ENCODE measurements at regions of chr15 and their contacts with region 1.

Region 1: GRCh38 chr15:62896978-62897647 is 145.4 kb upstream of the TPM1 start:
- DNase-seq: peak; percentile 99
- H3K4me3 ChIP-seq: no peak overlapping the region
- H3K27ac ChIP-seq: peak overlapping the region; percentile 100
- H3K4me1 ChIP-seq: peaks cover 42% of the 10 kb centered on the region
- H3K27me3 ChIP-seq: no peaks in the 10 kb centered on the region
- CTCF ChIP-seq: no peak
- POLR2A ChIP-seq: peak; percentile 78

Region 2: GRCh38 chr15:62173215-62173614 is 723.9 kb before region 1 on chr15:
- CTCF ChIA-PET with region 1: no interaction called
- POLR2A ChIA-PET with region 1: interaction called, 3 read pairs
- dilution Hi-C with region 1: no loop called
- intact Hi-C with region 1: loop called (anchors 1 kb)
- DNase-seq: peak; percentile 97
- H3K4me3 ChIP-seq: peak overlapping the region in 2 of 3 experiments; percentile 10 to 68
- H3K27ac ChIP-seq: peak overlapping the region; percentile 100
- H3K4me1 ChIP-seq: peaks cover 42% of the 10 kb centered on the region
- H3K27me3 ChIP-seq: no peaks in the 10 kb centered on the region
- CTCF ChIP-seq: no peak
- POLR2A ChIP-seq: peak; percentile 51

Region 3: DNA sequence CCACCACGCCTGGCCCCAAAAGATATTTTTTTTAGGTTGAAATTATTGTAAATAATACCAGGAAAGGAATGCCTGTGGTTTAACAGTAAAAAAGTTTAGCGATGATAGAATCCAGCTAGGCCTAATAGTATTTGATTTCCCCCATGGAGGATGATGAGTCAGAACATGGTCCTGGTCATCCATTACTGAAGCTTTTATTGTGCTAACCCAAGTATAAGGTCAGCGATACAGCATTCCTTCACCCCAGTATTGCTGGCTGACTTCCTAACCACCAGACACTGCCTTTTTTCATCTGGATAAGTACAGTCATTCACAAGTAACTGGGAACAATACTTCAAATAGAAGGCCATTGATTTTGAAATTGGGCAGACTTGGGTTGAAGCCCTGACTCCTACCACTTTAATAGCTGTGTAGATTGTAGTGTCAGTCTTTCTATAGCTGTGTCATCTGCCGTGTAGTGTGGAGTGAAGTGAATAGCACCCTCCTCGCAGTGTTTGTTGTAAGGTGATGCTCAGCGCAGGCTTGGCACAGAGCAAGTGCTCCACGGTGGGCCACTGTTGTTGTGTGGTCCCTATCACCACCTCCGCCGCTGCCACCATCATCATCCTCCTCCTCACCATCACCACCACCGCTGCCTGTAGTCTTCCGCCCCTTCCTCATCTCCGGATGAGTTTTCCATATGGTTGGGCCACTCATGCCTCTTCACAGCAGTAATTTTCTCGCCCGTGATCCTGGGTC is 290.6 kb before region 1 on chr15:
- CTCF ChIA-PET with region 1: no interaction called
- POLR2A ChIA-PET with region 1: no interaction called
- dilution Hi-C with region 1: no loop called
- intact Hi-C with region 1: no loop called
- DNase-seq: no peak
- H3K4me3 ChIP-seq: no peak overlapping the region
- H3K27ac ChIP-seq: no peak overlapping the region
- H3K4me1 ChIP-seq: no peaks in the 10 kb centered on the region
- H3K27me3 ChIP-seq: no peaks in the 10 kb centered on the region
- CTCF ChIP-seq: no peak
- POLR2A ChIP-seq: no peak

Region 4: GRCh38 chr15:62828364-62828763 is 68.7 kb before region 1 on chr15:
- CTCF ChIA-PET with region 1: no interaction called
- POLR2A ChIA-PET with region 1: no interaction called
- dilution Hi-C with region 1: no loop called
- intact Hi-C with region 1: no loop called
- DNase-seq: no peak
- H3K4me3 ChIP-seq: no peak overlapping the region
- H3K27ac ChIP-seq: no peak overlapping the region
- H3K4me1 ChIP-seq: no peaks in the 10 kb centered on the region
- H3K27me3 ChIP-seq: no peaks in the 10 kb centered on the region
- CTCF ChIP-seq: no peak
- POLR2A ChIP-seq: no peak

Region 5: GRCh38 chr15:62847900-62848489 is 49.1 kb before region 1 on chr15:
- CTCF ChIA-PET with region 1: interaction called, 28 read pairs
- POLR2A ChIA-PET with region 1: interaction called, 9 read pairs
- dilution Hi-C with region 1: no loop called
- intact Hi-C with region 1: loop called (anchors 1 kb)
- DNase-seq: peak; percentile 65
- H3K4me3 ChIP-seq: no peak overlapping the region
- H3K27ac ChIP-seq: peak overlapping the region; percentile 44
- H3K4me1 ChIP-seq: peaks cover 39% of the 10 kb centered on the region
- H3K27me3 ChIP-seq: no peaks in the 10 kb centered on the region
- CTCF ChIP-seq: peak; percentile 57 to 73
- POLR2A ChIP-seq: no peak

Region 6: GRCh38 chr15:62928242-62928995 is 31.3 kb after region 1 on chr15:
- CTCF ChIA-PET with region 1: interaction called, 6 read pairs
- POLR2A ChIA-PET with region 1: no interaction called
- dilution Hi-C with region 1: no loop called
- intact Hi-C with region 1: loop called (anchors 1 kb)
- DNase-seq: peak; percentile 68
- H3K4me3 ChIP-seq: peak overlapping the region in 1 of 3 experiments; percentile 40
- H3K27ac ChIP-seq: peak overlapping the region; percentile 99
- H3K4me1 ChIP-seq: peaks cover 21% of the 10 kb centered on the region
- H3K27me3 ChIP-seq: no peaks in the 10 kb centered on the region
- CTCF ChIP-seq: peak; percentile 5 to 9
- POLR2A ChIP-seq: no peak

Region 7: DNA sequence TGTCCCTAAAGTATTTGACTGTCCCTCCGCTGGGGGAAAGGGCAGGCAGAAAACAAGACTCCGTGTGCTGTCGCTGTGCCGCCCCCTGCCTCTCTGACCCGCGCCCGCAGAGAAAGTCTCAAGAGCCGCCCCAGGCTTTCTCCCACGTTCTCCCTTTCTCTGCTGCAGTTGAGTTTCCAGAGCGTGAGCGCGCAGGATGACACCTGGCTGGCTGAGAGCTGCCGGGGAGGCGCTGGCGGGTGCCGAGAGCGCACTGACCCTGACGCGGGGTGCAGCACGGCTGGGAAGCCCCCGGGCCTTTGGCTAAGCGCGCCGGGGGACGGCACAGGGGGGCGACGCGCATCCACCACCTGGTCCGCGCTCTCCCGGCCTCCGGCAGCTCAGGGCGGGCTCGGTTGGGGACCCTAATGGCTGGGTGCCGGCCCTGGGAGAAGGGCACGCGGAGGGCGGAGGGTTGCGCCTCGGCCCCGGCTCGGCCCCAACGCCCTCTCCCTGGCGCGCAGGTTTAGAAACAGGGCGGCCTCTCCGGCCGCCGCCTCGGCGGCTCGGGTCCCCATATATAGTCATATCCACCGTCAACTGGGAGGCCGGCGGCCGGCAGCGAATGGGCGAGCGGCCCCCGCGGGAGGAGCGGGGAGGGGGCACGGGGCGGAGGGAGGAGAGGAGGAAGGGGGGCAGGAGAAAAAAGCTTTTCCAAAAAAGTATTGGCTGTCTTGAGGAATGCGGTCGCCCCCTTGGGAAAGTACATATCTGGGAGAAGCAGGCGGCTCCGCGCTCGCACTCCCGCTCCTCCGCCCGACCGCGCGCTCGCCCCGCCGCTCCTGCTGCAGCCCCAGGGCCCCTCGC is 145.1 kb after region 1 on chr15 and contains the start of gene TPM1:
- CTCF ChIA-PET with region 1: interaction called, 29 read pairs
- POLR2A ChIA-PET with region 1: interaction called, 70 read pairs
- dilution Hi-C with region 1: no loop called
- intact Hi-C with region 1: loop called (anchors 1 kb)
- DNase-seq: peak; percentile 91
- H3K4me3 ChIP-seq: peak within 1 kb of the TSS; percentile 77 to 95 (median 83)
- H3K27ac ChIP-seq: peak within 1 kb of the TSS; percentile 87
- H3K4me1 ChIP-seq: peaks cover 31% of the 10 kb centered on the region
- H3K27me3 ChIP-seq: no peaks in the 10 kb centered on the region
- CTCF ChIP-seq: peak in 1 of 2 donors; percentile 12
- POLR2A ChIP-seq: peak; percentile 91
- total RNA-seq, gene TPM1: 558 and 678 TPM in 2 replicates

Region 8: DNA sequence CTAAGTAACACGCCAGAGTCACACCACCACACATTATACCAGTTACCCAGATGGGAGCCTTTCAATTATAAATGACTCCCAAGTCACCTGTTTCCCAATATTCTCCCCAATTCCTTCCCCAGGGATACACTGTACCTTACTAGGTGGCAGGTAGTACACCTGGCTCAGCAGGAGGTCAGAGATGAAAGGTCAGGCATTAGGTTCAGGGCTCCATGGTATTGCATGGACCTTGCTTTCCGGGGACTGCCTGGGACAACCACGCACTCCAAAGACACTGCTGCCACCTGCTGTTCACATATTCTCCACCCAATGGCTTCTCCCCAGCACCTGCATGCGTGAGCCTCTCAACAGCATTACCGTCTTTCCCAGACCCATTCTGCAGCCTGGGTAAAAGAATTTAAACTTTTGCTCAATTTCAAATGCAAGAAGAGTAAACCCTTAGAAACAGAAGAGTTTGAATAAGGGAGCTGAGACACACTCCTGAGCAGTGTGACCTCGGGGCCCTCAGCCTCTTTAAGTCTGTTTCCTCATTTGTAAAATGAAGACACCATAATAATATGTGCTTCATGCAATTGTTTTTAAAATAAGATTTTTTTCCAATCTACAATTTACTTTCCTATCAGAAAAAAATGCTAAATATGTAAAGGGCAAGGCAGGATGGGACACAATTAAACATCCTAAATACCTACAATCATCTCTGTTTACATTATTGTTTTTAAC is 196.5 kb after region 1 on chr15:
- CTCF ChIA-PET with region 1: interaction called, 3 read pairs
- POLR2A ChIA-PET with region 1: no interaction called
- dilution Hi-C with region 1: no loop called
- intact Hi-C with region 1: loop called (anchors 1 kb)
- DNase-seq: peak; percentile 73
- H3K4me3 ChIP-seq: no peak overlapping the region
- H3K27ac ChIP-seq: no peak overlapping the region
- H3K4me1 ChIP-seq: peaks cover 22% of the 10 kb centered on the region
- H3K27me3 ChIP-seq: no peaks in the 10 kb centered on the region
- CTCF ChIP-seq: peak; percentile 83 to 84
- POLR2A ChIP-seq: no peak

Region 9: DNA sequence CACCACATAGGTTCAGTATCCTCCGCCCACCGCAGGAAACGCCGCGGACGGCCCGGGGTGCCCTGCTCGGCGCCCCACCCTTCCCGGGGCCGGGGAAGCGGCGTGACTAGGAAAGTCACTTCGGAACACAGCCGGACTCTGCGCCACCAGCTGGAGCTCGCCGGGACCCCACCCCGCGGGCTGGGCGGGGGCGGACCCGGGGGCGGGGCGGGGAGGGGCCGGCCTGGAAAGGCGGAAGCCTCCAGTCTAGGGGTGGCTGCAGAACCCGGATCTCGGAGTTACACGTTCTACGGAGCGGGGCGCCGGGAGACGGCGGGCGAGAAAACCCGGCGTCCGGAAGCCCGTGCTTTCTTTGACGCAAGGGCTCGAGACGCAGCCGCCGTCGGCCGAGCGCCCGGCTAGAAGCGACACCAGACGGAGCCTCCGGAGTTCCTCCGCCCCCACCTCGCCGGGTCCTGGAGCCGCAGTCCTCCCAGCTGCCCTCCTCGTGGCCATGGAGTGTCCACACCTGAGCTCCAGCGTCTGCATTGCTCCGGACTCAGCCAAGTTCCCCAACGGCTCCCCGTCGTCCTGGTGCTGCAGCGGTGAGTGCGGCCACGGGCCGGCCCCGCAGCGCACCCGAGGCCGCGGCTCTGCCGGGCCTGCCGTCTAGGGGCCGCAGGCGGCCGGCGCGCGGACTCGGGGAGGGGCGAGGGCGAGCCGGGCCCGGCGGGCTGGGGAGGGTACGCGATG is 607.3 kb after region 1 on chr15 and contains the start of gene USP3:
- CTCF ChIA-PET with region 1: no interaction called
- POLR2A ChIA-PET with region 1: no interaction called
- dilution Hi-C with region 1: no loop called
- intact Hi-C with region 1: loop called (anchors 5 kb)
- DNase-seq: peak; percentile 96
- H3K4me3 ChIP-seq: peak within 1 kb of the TSS; percentile 55 to 87 (median 85)
- H3K27ac ChIP-seq: peak within 1 kb of the TSS; percentile 92
- H3K4me1 ChIP-seq: peaks cover 61% of the 10 kb centered on the region
- H3K27me3 ChIP-seq: no peaks in the 10 kb centered on the region
- CTCF ChIP-seq: peak in 1 of 2 donors; percentile 32
- POLR2A ChIP-seq: peak; percentile 80
- total RNA-seq, gene USP3: 52.4 and 57.2 TPM in 2 replicates

Measured in endothelial cell of umbilical vein (primary cell).